PC-3 (cell line): ENCODE measurements at regions of chr7 and their contacts with region 1.

Region 1: GRCh38 chr7:78301407-78301806 is 502.8 kb downstream of the PHTF2 start:
- DNase-seq: no peak
- ATAC-seq: no peak
- H3K4me3 ChIP-seq: no peak overlapping the region
- H3K27ac ChIP-seq: no peak overlapping the region
- H3K4me1 ChIP-seq: no peaks in the 10 kb centered on the region
- H3K27me3 ChIP-seq: peaks cover 5% of the 10 kb centered on the region; the same call in 1 of the 2 replicates
- CTCF ChIP-seq: no peak

Region 2: GRCh38 chr7:78176171-78176570 is 125.2 kb before region 1 on chr7:
- CTCF ChIA-PET with region 1: no interaction called
- POLR2A ChIA-PET with region 1: interaction called, 10 read pairs
- intact Hi-C with region 1: no loop called
- DNase-seq: no peak
- ATAC-seq: no peak
- H3K4me3 ChIP-seq: no peak overlapping the region
- H3K27ac ChIP-seq: no peak overlapping the region
- H3K4me1 ChIP-seq: no peaks in the 10 kb centered on the region
- H3K27me3 ChIP-seq: peaks cover 66% of the 10 kb centered on the region
- CTCF ChIP-seq: no peak